Activated CD4-positive, alpha-beta T cell treated with anti-CD3 and anti-CD28 coated beads for 36 hours (primary cell): ENCODE measurements at regions of chr10 and their contacts with region 1.

Region 1: DNA sequence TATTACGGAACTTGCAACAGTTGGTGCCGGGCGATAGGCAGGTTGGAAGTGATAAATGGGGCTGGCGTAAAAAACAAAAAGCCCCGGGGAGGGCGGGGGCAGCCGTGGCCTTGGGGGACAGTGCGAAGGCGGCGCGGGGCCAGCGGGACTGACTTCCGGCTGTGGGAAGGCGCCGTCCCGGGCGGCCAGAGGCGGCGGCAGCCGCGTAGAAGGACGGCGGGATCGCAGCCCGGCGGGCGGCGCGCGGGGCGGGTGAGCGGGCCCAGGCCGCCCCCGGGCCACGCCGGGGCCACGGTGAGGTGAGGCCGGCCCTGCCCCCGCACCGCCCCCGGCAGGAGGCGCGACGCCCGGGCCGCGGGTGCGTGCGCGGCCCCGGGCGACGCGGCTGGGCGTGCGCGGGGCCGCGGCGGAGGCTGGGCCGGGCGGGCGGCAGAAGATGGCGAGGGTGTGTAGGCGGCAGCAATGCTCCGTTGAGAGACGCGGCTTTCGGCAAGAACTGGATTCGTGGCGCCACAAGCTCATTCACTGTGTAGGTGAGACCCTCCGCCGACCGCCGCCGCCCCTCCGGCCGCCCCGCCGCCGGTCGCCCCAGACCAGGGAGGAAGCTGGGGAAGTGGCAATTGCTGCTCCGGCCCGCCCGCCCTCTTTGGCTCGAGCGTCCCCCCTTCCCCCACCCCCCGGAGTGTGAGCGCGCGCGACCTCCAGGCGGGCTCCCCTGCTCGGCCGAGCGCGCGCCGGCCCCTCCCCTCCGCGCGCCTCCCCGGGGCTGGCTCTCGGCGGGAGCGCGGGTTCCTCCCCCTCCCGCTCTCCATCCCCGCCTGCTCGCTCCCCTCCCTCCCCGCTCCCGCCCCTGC is at the start of gene LCOR:
- DNase-seq: peak; percentile 91
- ATAC-seq: peak; percentile 71
- H3K4me3 Mint-ChIP-seq: peak within 1 kb of the TSS; percentile 96
- H3K27ac Mint-ChIP-seq: peak within 1 kb of the TSS; percentile 96
- H3K4me1 Mint-ChIP-seq: peaks cover 49% of the 10 kb centered on the region
- H3K27me3 Mint-ChIP-seq: no peaks in the 10 kb centered on the region
- total RNA-seq, gene LCOR: 22.0 to 23.4 TPM

Region 2: DNA sequence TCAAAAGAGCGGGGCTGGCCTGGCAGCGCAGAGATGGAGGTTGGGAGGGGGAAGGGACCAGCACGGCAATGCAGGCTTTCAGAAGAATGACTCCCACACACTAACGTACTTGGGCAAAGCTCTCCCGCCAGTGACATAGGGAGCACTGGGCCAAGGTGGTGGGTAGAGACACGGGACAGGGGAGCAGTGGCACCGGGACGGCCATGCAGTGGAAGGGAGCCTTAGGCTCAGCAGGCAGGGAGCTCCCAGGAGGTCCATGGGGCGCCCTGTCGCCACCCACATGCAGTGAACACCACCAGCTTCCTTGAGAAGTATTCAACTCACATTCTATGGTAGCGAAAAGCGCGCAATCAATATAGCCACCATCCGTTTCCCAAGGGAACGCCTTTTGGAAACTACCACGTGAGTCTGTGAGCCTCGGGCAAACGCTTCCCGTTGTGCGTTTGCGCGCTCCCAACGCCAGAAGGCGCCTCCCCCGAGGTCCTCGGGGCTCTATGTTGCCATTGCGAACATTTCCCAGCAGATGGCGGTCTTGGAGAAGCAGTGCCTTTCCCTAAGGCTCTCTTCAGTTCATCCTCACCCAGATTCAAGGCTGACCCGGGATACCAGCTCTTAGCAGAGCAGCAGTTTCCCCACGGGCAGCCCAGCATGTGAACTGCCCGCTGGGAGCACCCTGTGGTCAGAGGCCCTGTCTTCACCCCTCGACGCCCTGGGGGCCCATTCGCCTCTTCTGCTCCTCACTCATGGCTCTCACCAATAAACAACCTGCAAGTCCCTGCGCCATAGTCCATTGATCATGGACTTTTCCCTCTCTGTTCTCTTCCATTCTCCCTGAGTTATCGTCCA is 456.9 kb before region 1 on chr10:
- CTCF ChIA-PET with region 1: interaction called, 3 read pairs
- POLR2A ChIA-PET with region 1: no interaction called
- intact Hi-C with region 1: loop called in 1 of 2 experiments (anchors 1 kb)
- DNase-seq: peak; percentile 88
- ATAC-seq: peak; percentile 93
- H3K4me3 Mint-ChIP-seq: peak overlapping the region; percentile 65
- H3K27ac Mint-ChIP-seq: no peak overlapping the region
- H3K4me1 Mint-ChIP-seq: peaks cover 9% of the 10 kb centered on the region
- H3K27me3 Mint-ChIP-seq: peaks cover 4% of the 10 kb centered on the region

Region 3: GRCh38 chr10:96765406-96766240 is 66.5 kb before region 1 on chr10:
- CTCF ChIA-PET with region 1: interaction called, 5 read pairs
- POLR2A ChIA-PET with region 1: no interaction called
- intact Hi-C with region 1: loop called (anchors 1 kb)
- DNase-seq: peak; percentile 88
- ATAC-seq: peak; percentile 96
- H3K4me3 Mint-ChIP-seq: no peak overlapping the region
- H3K27ac Mint-ChIP-seq: no peak overlapping the region
- H3K4me1 Mint-ChIP-seq: no peaks in the 10 kb centered on the region
- H3K27me3 Mint-ChIP-seq: no peaks in the 10 kb centered on the region

Region 4: DNA sequence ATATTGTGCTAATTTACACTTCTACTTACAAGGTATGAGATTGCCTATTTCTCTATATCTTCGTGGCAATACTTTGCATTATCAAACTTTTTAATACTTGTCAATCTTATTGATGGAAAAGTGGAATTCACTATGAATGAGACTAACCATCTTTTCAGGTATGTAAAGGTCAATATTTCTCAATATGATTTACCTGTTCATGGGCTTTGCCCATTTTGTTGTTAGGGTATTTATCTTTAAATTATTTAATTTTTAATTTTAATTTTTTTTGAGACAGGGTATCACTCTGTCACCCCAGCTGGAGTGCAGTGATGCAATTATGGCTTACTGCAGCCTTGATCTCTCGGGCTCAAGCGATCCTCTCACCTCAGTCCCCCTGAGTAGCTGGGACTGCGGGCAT is 47.8 kb before region 1 on chr10:
- CTCF ChIA-PET with region 1: no interaction called
- POLR2A ChIA-PET with region 1: no interaction called
- intact Hi-C with region 1: no loop called
- DNase-seq: no peak
- ATAC-seq: no peak
- H3K4me3 Mint-ChIP-seq: no peak overlapping the region
- H3K27ac Mint-ChIP-seq: no peak overlapping the region
- H3K4me1 Mint-ChIP-seq: no peaks in the 10 kb centered on the region
- H3K27me3 Mint-ChIP-seq: no peaks in the 10 kb centered on the region

Region 5: GRCh38 chr10:96967847-96968246 is 135.8 kb after region 1 on chr10:
- CTCF ChIA-PET with region 1: no interaction called
- POLR2A ChIA-PET with region 1: no interaction called
- intact Hi-C with region 1: no loop called
- DNase-seq: no peak
- ATAC-seq: no peak
- H3K4me3 Mint-ChIP-seq: no peak overlapping the region
- H3K27ac Mint-ChIP-seq: no peak overlapping the region
- H3K4me1 Mint-ChIP-seq: no peaks in the 10 kb centered on the region
- H3K27me3 Mint-ChIP-seq: no peaks in the 10 kb centered on the region

Region 6: GRCh38 chr10:97318772-97319651 is 486.9 kb after region 1 on chr10 and contains the start of gene FRAT1:
- CTCF ChIA-PET with region 1: no interaction called
- POLR2A ChIA-PET with region 1: no interaction called
- intact Hi-C with region 1: loop called in 1 of 2 experiments (anchors 5 kb)
- DNase-seq: peak; percentile 92
- ATAC-seq: peak; percentile 64
- H3K4me3 Mint-ChIP-seq: peak within 1 kb of the TSS; percentile 91
- H3K27ac Mint-ChIP-seq: peak within 1 kb of the TSS; percentile 99
- H3K4me1 Mint-ChIP-seq: peaks cover 29% of the 10 kb centered on the region
- H3K27me3 Mint-ChIP-seq: no peaks in the 10 kb centered on the region
- total RNA-seq, gene FRAT1: 1.3 to 1.8 TPM

Region 7: DNA sequence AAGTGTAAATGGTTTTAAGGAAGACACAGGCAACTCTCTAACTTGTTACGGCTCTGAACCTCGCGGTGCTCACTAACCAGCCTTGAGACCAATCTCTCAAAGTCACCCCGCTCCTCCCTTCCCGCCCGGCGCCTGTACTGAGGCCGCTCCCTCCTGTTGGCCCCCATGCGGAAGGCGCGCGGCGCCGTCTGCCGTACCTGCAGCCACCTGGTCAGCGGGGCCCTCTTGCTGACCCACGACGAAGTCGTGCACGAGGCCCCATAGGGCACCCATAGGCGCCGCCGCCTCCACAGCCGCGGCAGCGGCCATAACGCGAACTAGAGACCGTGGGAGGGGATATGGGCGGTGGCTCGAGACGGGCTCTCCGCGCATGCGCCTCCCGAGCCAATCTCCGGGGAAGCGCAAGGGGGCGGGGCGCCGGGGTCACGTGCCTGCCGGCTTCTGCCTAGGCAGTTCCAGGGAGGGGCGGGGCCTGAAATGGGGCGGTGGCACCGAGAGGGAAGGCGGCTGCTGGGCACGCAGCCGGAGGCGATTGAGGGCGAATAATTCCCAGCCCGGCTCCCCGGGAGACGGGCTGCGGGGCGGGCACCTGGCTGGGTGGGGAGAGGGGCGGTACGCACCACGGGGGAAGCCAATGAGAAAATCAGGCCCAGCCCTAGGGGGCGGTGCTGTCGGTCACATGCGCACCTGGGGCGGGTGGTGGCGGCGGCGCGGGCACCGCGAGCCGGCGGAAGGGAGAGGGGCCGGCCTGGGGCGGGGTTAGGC is 666.2 kb after region 1 on chr10 and contains the start of gene MMS19:
- CTCF ChIA-PET with region 1: no interaction called
- POLR2A ChIA-PET with region 1: no interaction called
- intact Hi-C with region 1: loop called in 1 of 2 experiments (anchors 1 kb)
- DNase-seq: peak; percentile 100
- ATAC-seq: peak; percentile 91
- H3K4me3 Mint-ChIP-seq: peak within 1 kb of the TSS; percentile 87
- H3K27ac Mint-ChIP-seq: peak within 1 kb of the TSS; percentile 97
- H3K4me1 Mint-ChIP-seq: peaks cover 38% of the 10 kb centered on the region
- H3K27me3 Mint-ChIP-seq: peaks cover 20% of the 10 kb centered on the region
- total RNA-seq, gene MMS19: 91.3 to 107 TPM